B cell (primary cell): ENCODE measurements at regions of chr18 and their contacts with region 1.

Region 1: DNA sequence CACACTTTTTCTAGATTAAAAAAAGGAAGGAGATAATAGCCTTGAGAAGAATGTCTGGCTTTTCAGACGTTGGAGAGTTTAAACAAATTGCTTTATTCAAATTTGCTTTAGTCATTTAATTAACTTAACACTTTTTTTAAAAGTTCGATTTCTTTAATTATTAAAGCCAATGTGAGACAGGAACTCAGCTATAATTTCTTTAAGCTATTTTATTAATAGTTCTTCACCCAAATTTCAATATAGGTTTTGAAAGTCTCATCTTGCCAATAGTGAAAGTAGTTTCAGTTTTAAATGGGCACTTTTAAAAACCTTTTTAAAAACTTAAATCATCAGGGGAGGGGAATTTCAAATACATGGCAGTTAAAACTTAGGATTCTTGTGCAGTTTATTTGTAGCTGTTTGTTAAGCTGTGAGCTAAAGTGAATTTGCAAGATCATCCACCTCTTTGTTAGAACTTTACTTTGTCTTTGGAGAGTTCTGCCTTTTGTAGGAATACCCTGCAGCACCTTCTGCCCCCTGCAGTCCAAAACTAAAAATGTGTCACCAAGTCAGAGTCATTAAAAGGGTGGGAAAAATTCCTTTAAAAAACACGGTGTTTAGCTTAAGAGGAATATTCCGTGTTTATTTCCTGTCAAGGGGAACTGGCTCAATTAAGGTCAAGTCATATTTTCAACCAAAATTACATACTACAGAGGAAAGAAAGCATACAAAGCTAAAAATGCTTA is 4.6 kb downstream of the TGIF1 start:
- DNase-seq: peak; percentile 77
- ATAC-seq: no peak
- H3K4me3 ChIP-seq: peak overlapping the region; percentile 23 to 79 (median 55)
- H3K4me3 Mint-ChIP-seq: peak overlapping the region; percentile 99
- H3K27ac ChIP-seq: peak overlapping the region; percentile 53 to 82
- H3K27ac Mint-ChIP-seq: peak overlapping the region; percentile 93
- H3K4me1 ChIP-seq: peaks cover 8 to 40% of the 10 kb centered on the region in 2 donors
- H3K4me1 Mint-ChIP-seq: peaks cover 44% of the 10 kb centered on the region
- H3K27me3 ChIP-seq: no peaks in the 10 kb centered on the region
- H3K27me3 Mint-ChIP-seq: no peaks in the 10 kb centered on the region
- CTCF ChIP-seq: peak; percentile 89

Region 2: GRCh38 chr18:1746131-1746530 is 1708.4 kb before region 1 on chr18:
- CTCF ChIA-PET with region 1: no interaction called
- POLR2A ChIA-PET with region 1: no interaction called
- intact Hi-C with region 1: no loop called
- DNase-seq: no peak
- ATAC-seq: no peak
- H3K4me3 ChIP-seq: no peak overlapping the region
- H3K4me3 Mint-ChIP-seq: no peak overlapping the region
- H3K27ac ChIP-seq: no peak overlapping the region
- H3K27ac Mint-ChIP-seq: no peak overlapping the region
- H3K4me1 ChIP-seq: no peaks in the 10 kb centered on the region
- H3K4me1 Mint-ChIP-seq: no peaks in the 10 kb centered on the region
- H3K27me3 ChIP-seq: no peaks in the 10 kb centered on the region
- H3K27me3 Mint-ChIP-seq: no peaks in the 10 kb centered on the region
- CTCF ChIP-seq: no peak

Region 3: DNA sequence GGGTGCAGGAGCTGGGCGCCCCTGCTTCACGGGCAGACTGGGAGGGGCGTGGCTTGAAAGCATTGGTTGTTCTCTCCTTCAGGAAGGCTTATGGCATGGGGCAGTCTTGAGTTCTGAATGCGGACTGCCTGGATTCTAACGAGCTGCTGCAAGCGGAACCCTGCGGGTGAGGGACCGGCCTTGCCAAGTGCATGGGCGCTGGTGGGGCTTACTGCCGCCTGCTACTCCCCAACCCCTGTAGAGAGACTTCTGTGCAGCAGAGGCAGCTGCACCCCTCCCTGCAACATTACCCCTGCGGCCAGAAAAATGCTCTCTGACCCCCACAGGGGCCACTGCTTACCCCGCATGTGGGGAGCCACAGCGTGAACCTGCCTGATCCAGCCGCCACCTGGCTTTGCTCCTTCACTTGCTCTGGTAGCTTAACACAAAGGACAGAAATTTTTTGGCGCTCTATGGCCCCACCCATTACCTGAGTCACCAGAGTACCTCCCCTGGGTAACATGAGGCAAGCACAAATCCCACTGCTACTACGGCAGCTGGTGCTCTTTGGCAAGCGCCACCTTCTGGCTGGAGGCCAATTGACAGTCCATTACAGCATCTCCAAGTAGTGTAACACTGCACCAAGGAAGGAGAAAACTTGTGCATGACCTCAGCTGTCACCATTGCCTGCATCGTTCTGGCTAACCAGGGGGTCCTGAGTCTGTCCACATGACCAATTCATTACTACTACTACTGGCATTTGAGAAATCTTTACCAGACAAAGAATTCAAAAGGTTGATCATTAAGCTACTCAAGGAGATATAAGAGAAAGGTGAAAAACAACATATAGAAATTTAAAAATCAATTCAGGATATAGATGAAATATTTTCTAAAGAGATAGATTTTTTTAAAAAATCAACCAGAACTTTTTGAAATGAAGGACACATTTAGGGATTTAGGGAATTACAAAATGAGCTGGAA is 157.2 kb before region 1 on chr18:
- CTCF ChIA-PET with region 1: interaction called, 22 read pairs
- POLR2A ChIA-PET with region 1: interaction called, 9 read pairs
- intact Hi-C with region 1: loop called (anchors 1 kb)
- DNase-seq: peak; percentile 90
- ATAC-seq: peak; percentile 99
- H3K4me3 ChIP-seq: peak overlapping the region; percentile 53 to 88 (median 85)
- H3K4me3 Mint-ChIP-seq: peak overlapping the region; percentile 96
- H3K27ac ChIP-seq: no peak overlapping the region
- H3K27ac Mint-ChIP-seq: peak overlapping the region; percentile 80
- H3K4me1 ChIP-seq: peaks cover 7 to 10% of the 10 kb centered on the region in 2 donors
- H3K4me1 Mint-ChIP-seq: peaks cover 13% of the 10 kb centered on the region
- H3K27me3 ChIP-seq: peaks cover 0 to 7% (median 2%) of the 10 kb centered on the region in 4 experiments
- H3K27me3 Mint-ChIP-seq: peaks cover 30% of the 10 kb centered on the region
- CTCF ChIP-seq: peak; percentile 89

Region 4: GRCh38 chr18:3380384-3380961 is 74.1 kb before region 1 on chr18:
- CTCF ChIA-PET with region 1: interaction called, 14 read pairs
- POLR2A ChIA-PET with region 1: interaction called, 5 read pairs
- intact Hi-C with region 1: loop called (anchors 5 kb)
- DNase-seq: peak; percentile 37
- ATAC-seq: peak; percentile 31
- H3K4me3 ChIP-seq: no peak overlapping the region
- H3K4me3 Mint-ChIP-seq: no peak overlapping the region
- H3K27ac ChIP-seq: no peak overlapping the region
- H3K27ac Mint-ChIP-seq: no peak overlapping the region
- H3K4me1 ChIP-seq: peaks cover 0 to 13% of the 10 kb centered on the region in 2 donors
- H3K4me1 Mint-ChIP-seq: peaks cover 15% of the 10 kb centered on the region
- H3K27me3 ChIP-seq: no peaks in the 10 kb centered on the region
- H3K27me3 Mint-ChIP-seq: no peaks in the 10 kb centered on the region
- CTCF ChIP-seq: peak; percentile 21

Region 5: GRCh38 chr18:3466045-3466444 is 11.5 kb after region 1 on chr18:
- CTCF ChIA-PET with region 1: interaction called, 18 read pairs
- POLR2A ChIA-PET with region 1: interaction called, 5 read pairs
- intact Hi-C with region 1: no loop called
- DNase-seq: no peak
- ATAC-seq: no peak
- H3K4me3 ChIP-seq: no peak overlapping the region
- H3K4me3 Mint-ChIP-seq: no peak overlapping the region
- H3K27ac ChIP-seq: no peak overlapping the region
- H3K27ac Mint-ChIP-seq: no peak overlapping the region
- H3K4me1 ChIP-seq: peaks cover 0 to 4% of the 10 kb centered on the region in 2 donors
- H3K4me1 Mint-ChIP-seq: peaks cover 4% of the 10 kb centered on the region
- H3K27me3 ChIP-seq: no peaks in the 10 kb centered on the region
- H3K27me3 Mint-ChIP-seq: no peaks in the 10 kb centered on the region
- CTCF ChIP-seq: no peak

Region 6: DNA sequence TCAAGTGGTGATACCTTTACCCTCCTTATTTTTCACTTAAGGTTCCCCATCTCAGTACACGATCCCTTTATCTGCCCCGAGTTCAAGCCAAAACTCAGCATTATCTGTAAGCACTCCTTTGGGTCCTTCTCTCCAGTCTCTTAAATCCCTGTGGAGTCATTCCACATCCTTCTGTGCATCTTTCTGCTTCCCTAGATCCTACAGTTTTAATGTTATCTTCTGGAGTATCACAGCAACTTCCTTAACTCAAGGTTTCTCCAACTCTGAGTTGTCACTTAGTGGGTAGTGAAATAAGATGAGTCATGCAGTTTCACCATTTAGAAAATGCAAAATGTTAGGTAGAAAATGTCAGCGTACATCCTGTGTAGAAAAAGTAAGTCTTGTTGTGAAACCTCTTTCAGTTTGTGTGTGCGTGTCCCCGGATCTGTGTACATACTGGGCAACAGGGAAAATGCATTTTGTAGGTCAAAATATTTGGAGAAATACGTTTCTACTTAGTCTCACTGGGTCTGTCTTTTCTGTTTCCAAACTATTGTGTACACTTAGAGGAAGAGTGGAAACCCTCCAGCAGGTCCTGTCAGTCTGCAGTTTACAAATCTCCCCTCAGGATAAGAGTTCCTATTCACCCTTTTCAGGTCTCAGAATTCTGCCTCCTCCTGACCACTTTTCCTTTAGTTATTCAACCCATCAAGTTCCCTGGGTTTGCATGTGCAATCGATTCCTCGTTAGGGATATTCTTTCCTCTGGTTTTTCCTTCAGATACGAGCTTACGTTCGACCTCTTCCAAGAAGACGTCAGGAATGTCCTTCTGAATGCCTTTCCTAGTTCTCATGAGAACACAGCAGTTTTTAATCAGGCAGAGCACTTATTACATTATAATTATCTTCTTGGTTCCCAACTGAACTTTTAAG is 150.2 kb after region 1 on chr18:
- CTCF ChIA-PET with region 1: interaction called, 23 read pairs
- POLR2A ChIA-PET with region 1: no interaction called
- intact Hi-C with region 1: no loop called
- DNase-seq: peak; percentile 52
- ATAC-seq: peak; percentile 68
- H3K4me3 ChIP-seq: peak overlapping the region; percentile 4 to 81 (median 53)
- H3K4me3 Mint-ChIP-seq: no peak overlapping the region
- H3K27ac ChIP-seq: peak overlapping the region; percentile 16 to 21
- H3K27ac Mint-ChIP-seq: no peak overlapping the region
- H3K4me1 ChIP-seq: peaks cover 36 to 38% of the 10 kb centered on the region in 2 donors
- H3K4me1 Mint-ChIP-seq: peaks cover 5% of the 10 kb centered on the region
- H3K27me3 ChIP-seq: no peaks in the 10 kb centered on the region
- H3K27me3 Mint-ChIP-seq: no peaks in the 10 kb centered on the region
- CTCF ChIP-seq: no peak